ENCODE measurements at regions of chr5 and their contacts with region 1.

Region 1: GRCh38 chr5:74934949-74935751 is 69.0 kb upstream of the FAM169A start:
- DNase-seq: peak; percentile 66
- H3K4me3 ChIP-seq: no peak overlapping the region
- H3K27ac ChIP-seq: no peak overlapping the region
- H3K4me1 ChIP-seq: peaks cover 13% of the 10 kb centered on the region; the same call in 1 of the 2 replicates
- H3K27me3 ChIP-seq: no peaks in the 10 kb centered on the region

Region 2: DNA sequence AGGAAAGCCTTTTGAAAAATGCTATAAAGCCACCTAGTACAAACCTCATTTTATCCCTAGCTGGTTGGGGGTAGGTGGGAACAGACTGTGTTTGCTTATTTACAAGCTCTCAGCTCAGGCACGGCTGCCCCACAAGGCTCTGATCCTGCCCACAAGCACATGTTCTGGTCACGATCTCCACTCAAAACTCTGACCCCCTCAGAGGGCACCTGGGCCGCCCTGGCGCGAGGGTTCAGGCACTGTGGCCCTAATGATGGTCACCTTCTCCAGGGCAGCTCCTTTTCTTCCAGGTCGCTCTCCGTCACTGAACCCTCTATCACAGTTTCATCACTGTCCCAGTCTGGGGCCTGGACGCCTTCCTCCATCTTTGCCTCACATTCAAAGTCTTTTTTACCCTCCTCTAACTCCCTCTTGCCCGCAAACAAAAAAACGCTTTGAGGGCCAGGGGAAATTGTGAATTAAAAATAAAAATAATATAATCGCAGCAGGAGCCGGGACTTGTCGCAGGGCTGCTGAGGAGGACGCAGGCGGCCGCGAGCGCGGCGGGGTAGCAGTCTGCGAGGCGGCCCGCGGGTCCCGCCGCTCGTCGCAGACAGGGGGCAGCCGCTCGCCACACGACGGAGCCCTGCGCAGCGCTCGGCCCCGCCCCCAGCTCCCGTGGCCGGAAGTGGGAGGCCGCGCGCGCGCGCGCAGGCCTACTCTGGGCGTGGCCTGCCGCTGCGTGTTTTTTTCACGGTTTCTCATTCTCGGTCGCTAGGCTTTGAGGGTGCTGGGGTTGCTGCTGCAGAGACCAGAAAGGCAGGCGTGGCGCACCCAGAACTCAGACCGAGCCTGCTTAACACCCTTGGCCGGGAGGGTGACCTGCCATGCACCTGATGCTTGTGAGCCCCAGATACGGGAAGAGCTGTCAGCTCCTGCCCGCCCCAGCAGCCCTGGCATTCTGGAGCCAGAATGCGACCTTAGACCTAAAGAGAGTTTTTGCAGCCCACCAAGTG is 301.5 kb after region 1 on chr5 and contains the start of gene ANKRD31:
- in situ Hi-C with region 1: loop called (anchors 25 kb)
- DNase-seq: peak; percentile 93
- H3K4me3 ChIP-seq: peak within 1 kb of the TSS; percentile 88
- H3K27ac ChIP-seq: peak within 1 kb of the TSS; percentile 41
- H3K4me1 ChIP-seq: peaks cover 8% of the 10 kb centered on the region; the same call in 1 of the 2 replicates
- H3K27me3 ChIP-seq: no peaks in the 10 kb centered on the region
- total RNA-seq, gene ANKRD31: not detected in 2 replicates

Measured in GM23248 (cell line).